Heart left ventricle (tissue), 16 donors: ENCODE measurements at regions of chr3 and their contacts with region 1.

Region 1: GRCh38 chr3:11818033-11818432 is 28.7 kb downstream of the TAMM41 start:
- DNase-seq: no peak
- ATAC-seq: peak in 1 of 4 donors; percentile 50
- H3K4me3 ChIP-seq: no peak overlapping the region
- H3K27ac ChIP-seq: no peak overlapping the region
- H3K4me1 ChIP-seq: peaks cover 0 to 6% (median 0%) of the 10 kb centered on the region in 12 donors
- H3K27me3 ChIP-seq: no peaks in the 10 kb centered on the region
- CTCF ChIP-seq: no peak
- POLR2A ChIP-seq: no peak

Region 2: DNA sequence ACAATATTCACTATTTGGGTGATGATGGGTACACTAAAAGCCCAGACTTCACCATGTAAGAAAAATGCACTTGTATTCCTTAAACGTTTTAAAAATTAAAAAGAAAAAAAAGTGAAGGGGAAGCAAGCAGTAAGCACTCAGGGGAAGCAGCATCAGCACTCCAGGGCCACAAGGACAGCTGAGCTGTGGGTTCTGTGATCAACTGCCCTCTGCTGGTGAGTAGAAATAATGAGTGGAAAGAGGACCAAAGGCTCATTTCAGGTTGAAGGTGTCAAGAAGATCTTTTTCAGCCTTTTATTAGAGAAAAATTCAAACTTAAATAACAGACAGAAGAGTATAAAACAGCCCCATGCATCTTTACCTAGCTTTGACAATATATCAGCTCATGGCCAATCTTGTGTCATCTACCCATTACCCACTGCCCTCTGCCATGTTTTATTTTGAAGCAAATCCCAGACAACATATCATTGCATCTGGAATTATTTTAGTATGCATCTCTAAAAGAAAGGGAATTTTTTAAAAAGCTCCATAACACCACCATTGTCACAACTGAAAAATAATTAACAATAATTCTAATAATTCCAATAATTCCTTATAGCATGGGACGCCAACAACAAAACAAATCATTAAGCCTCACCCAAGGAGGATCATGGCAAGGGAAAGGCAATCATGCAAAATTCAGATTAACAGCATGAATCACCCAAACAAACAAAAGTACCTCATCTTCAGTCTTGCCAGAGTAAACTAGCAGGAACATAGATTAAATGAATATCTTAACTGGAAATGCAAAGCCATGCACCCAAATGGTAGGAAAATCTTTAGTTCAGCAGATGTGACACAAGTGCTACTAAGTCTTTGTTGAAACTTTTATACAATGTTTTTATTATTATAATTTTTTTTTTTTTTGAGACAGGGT is 13.8 kb before region 1 on chr3:
- intact Hi-C with region 1: no loop called
- DNase-seq: peak in 3 of 5 donors; percentile 24 to 53 (median 25)
- ATAC-seq: peak in 3 of 4 donors; percentile 69 to 74 (median 72)
- H3K4me3 ChIP-seq: no peak overlapping the region
- H3K27ac ChIP-seq: no peak overlapping the region
- H3K4me1 ChIP-seq: no peaks in the 10 kb centered on the region
- H3K27me3 ChIP-seq: no peaks in the 10 kb centered on the region
- CTCF ChIP-seq: peak; percentile 62 to 81 (median 71)
- POLR2A ChIP-seq: no peak

Region 3: GRCh38 chr3:11846281-11847034 is 28.4 kb after region 1 on chr3 and contains the start of gene TAMM41:
- intact Hi-C with region 1: loop called in 1 of 10 experiments (anchors 2 kb)
- DNase-seq: peak; percentile 92 to 96 (median 94)
- ATAC-seq: peak; percentile 100
- H3K4me3 ChIP-seq: peak within 1 kb of the TSS; percentile 65 to 94 (median 84)
- H3K27ac ChIP-seq: peak within 1 kb of the TSS; percentile 62 to 96 (median 86)
- H3K4me1 ChIP-seq: peaks cover 3 to 30% (median 22%) of the 10 kb centered on the region in 12 donors
- H3K27me3 ChIP-seq: no peaks in the 10 kb centered on the region
- CTCF ChIP-seq: peak; percentile 57 to 96 (median 82)
- POLR2A ChIP-seq: peak in 1 of 2 donors; percentile 58
- total RNA-seq, gene TAMM41: 4.5 to 12.7 (median 10.4) TPM